PC-9 (cell line): ENCODE measurements at regions of chr5 and their contacts with region 1.

Region 1: GRCh38 chr5:160119142-160119904 is at the start of gene PWWP2A:
- DNase-seq: peak; percentile 98 to 100
- H3K4me3 ChIP-seq: peak within 1 kb of the TSS; percentile 94
- H3K27ac ChIP-seq: peak within 1 kb of the TSS; percentile 37; the same call in 1 of the 2 replicates
- H3K4me1 ChIP-seq: peaks cover 14% of the 10 kb centered on the region
- H3K27me3 ChIP-seq: no peaks in the 10 kb centered on the region
- CTCF ChIP-seq: no peak
- total RNA-seq, gene PWWP2A: 19.9 and 23.2 TPM in 2 replicates

Region 2: DNA sequence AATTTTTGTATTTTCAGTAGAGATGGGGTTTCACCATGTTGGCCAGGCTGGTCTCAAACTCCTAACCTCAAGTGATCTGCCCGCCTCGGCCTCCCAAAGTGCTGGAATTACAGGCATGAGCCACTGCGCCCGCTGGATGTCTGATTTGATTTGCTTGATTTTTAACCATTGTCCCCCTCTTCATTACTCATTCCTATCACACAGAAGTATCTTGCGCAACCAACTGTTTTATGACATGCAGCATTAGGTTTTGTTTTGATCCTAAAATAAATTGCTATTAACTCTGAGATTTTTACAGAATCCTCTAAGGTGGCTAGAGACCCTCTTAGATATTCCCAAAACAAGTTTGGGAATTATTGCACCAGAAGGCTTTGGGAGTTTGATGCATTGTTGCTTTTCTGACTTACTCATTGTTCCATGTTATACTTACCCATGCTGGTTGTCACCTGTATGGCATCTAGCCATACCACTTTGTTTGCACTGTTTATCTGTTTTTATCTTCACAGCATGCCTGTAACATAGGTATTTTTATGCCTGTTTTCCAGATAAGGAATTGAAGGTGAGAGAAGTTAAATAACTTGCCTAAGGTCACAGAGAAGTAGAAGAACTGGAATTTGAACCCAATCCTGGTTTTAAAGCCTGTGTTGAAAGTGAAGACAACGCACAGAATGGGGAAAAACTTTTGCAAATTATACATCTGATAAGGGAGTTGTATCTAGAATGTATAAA is 35.9 kb after region 1 on chr5:
- CTCF ChIA-PET with region 1: no interaction called
- POLR2A ChIA-PET with region 1: no interaction called
- intact Hi-C with region 1: loop called (anchors 1 kb)
- DNase-seq: peak; percentile 47 to 91
- H3K4me3 ChIP-seq: no peak overlapping the region
- H3K27ac ChIP-seq: no peak overlapping the region
- H3K4me1 ChIP-seq: peaks cover 16% of the 10 kb centered on the region
- H3K27me3 ChIP-seq: no peaks in the 10 kb centered on the region
- CTCF ChIP-seq: no peak

Region 3: DNA sequence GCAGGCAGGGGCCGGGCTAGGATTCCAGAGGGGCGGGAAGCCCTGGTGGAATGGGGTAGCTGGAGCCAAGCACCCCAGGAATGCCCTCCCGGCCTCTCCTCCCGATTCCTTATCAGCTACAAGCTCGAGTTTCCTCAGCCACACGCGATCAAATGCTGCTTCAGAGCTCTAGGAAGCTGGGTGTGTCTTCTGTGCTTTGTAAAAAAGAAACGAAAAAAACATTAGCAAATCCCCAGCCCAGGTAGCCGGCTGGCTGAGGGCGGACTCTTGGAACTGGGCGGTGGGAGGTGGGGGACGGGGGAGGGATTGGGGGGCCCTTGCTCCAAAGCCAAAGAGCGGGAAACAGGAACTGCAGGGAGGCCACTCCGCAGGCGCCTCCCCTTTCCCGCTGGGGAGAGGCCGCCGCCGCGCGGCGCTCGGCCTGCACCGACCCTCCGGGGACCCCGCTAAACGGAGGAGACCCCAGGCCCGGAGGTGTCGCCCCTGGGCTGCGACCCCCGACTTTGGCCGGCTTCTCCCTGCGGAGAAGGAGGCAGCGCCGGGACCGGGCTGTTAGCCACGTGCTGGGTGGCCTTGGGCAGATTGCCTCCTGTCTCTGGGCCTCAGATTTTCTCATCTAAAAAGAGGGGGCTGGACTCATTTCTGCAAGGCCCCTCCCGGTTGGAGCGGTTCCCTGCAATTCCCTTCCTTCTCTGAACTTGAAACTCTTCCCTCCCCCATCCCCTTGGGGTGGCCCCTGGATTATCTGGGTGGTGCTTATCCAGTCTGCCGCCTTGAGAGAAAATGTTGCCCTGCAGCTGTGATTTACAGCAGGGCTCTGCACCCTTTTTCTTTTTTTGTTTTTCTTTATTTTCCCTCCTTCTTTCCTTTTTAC is 69.1 kb after region 1 on chr5:
- CTCF ChIA-PET with region 1: interaction called, 4 read pairs
- POLR2A ChIA-PET with region 1: interaction called, 4 read pairs
- intact Hi-C with region 1: loop called (anchors 1 kb)
- DNase-seq: peak; percentile 78 to 92
- H3K4me3 ChIP-seq: peak overlapping the region; percentile 57; the same call in 1 of the 2 replicates
- H3K27ac ChIP-seq: 0 out of 2 replicates have a peak overlapping the region, but pooled peaks have one; percentile 29
- H3K4me1 ChIP-seq: 0 out of 2 replicates have a peak, but pooled peaks cover 12% of the 10 kb centered on the region
- H3K27me3 ChIP-seq: no peaks in the 10 kb centered on the region
- CTCF ChIP-seq: no peak

Region 4: GRCh38 chr5:160260881-160261815 is 141.8 kb after region 1 on chr5:
- CTCF ChIA-PET with region 1: no interaction called
- POLR2A ChIA-PET with region 1: no interaction called
- intact Hi-C with region 1: loop called (anchors 1 kb)
- DNase-seq: peak; percentile 84 to 99
- H3K4me3 ChIP-seq: no peak overlapping the region
- H3K27ac ChIP-seq: peak overlapping the region; percentile 79
- H3K4me1 ChIP-seq: peaks cover 18% of the 10 kb centered on the region
- H3K27me3 ChIP-seq: no peaks in the 10 kb centered on the region
- CTCF ChIP-seq: no peak